ENCODE measurements at regions of chr6 and their contacts with region 1.

Region 1: DNA sequence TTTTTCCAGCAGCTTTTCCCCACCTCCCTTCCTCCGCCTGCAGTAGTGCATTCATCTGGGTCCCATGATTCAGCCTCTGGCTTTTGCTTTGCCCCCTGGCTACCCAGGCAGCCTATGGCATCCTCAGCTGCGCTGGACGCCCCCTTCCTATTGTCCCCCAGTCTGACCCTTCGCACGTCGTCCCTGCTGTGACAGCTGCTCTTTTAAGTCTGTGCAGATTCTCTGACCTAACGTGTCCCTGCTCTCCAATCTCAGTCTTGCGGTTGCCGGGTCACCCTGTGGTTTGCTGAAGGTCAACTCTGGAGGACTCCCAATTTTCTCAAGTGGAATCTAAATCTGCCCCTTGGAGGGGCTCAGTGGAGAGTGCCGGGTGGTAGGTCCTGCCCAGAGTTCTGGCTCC is 294.3 kb downstream of the CDC5L start:
- DNase-seq: no peak
- ATAC-seq: no peak
- H3K4me3 Mint-ChIP-seq: no peak overlapping the region
- H3K27ac Mint-ChIP-seq: no peak overlapping the region
- H3K4me1 Mint-ChIP-seq: peaks cover 2% of the 10 kb centered on the region
- H3K27me3 Mint-ChIP-seq: no peaks in the 10 kb centered on the region
- CTCF ChIP-seq: no peak

Region 2: GRCh38 chr6:44599672-44600071 is 82.1 kb before region 1 on chr6:
- CTCF ChIA-PET with region 1: no interaction called
- POLR2A ChIA-PET with region 1: no interaction called
- intact Hi-C with region 1: no loop called
- DNase-seq: no peak
- ATAC-seq: no peak
- H3K4me3 Mint-ChIP-seq: no peak overlapping the region
- H3K27ac Mint-ChIP-seq: no peak overlapping the region
- H3K4me1 Mint-ChIP-seq: no peaks in the 10 kb centered on the region
- H3K27me3 Mint-ChIP-seq: peaks cover 4% of the 10 kb centered on the region
- CTCF ChIP-seq: no peak

Region 3: GRCh38 chr6:44788387-44788981 is 106.7 kb after region 1 on chr6:
- CTCF ChIA-PET with region 1: no interaction called
- POLR2A ChIA-PET with region 1: no interaction called
- intact Hi-C with region 1: loop called (anchors 10 kb)
- DNase-seq: no peak
- ATAC-seq: no peak
- H3K4me3 Mint-ChIP-seq: no peak overlapping the region
- H3K27ac Mint-ChIP-seq: peak overlapping the region; percentile 22
- H3K4me1 Mint-ChIP-seq: peaks cover 10% of the 10 kb centered on the region
- H3K27me3 Mint-ChIP-seq: peaks cover 4% of the 10 kb centered on the region
- CTCF ChIP-seq: no peak